ENCODE measurements at regions of chr4 and their contacts with region 1.

Region 1: GRCh38 chr4:68375667-68376559 is 26.0 kb upstream of the YTHDC1 start:
- DNase-seq: peak; percentile 87
- H3K4me3 Mint-ChIP-seq: peak overlapping the region; percentile 67
- H3K27ac Mint-ChIP-seq: no peak overlapping the region
- H3K4me1 Mint-ChIP-seq: peaks cover 24% of the 10 kb centered on the region
- H3K27me3 Mint-ChIP-seq: no peaks in the 10 kb centered on the region
- CTCF ChIP-seq: peak; percentile 89

Region 2: DNA sequence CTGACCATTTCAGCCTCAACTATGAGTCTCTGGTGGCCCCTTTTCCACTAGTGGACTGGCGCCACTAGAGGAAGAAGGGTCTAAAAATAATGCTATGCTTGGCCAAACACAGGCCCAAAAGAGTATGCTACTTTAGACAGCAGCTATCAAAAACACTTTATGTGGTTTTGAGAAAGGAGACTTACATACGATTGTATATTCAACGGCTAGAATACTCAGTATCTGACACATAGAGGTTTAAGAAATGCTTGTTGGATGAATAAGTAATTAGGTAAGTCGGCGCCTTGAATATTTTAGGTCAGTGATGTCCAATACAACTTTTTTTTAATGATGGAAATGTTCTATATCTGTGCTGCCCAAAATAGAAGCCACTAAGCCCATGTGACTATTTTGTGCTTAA is 386.9 kb before region 1 on chr4:
- CTCF ChIA-PET with region 1: no interaction called
- POLR2A ChIA-PET with region 1: no interaction called
- intact Hi-C with region 1: loop called (anchors 1 kb)
- DNase-seq: no peak
- H3K4me3 Mint-ChIP-seq: no peak overlapping the region
- H3K27ac Mint-ChIP-seq: no peak overlapping the region
- H3K4me1 Mint-ChIP-seq: no peaks in the 10 kb centered on the region
- H3K27me3 Mint-ChIP-seq: no peaks in the 10 kb centered on the region
- CTCF ChIP-seq: no peak

Region 3: GRCh38 chr4:68271851-68272756 is 103.8 kb before region 1 on chr4:
- CTCF ChIA-PET with region 1: interaction called, 62 read pairs
- POLR2A ChIA-PET with region 1: interaction called, 6 read pairs
- intact Hi-C with region 1: loop called (anchors 1 kb)
- DNase-seq: peak; percentile 67
- H3K4me3 Mint-ChIP-seq: peak overlapping the region; percentile 77
- H3K27ac Mint-ChIP-seq: no peak overlapping the region
- H3K4me1 Mint-ChIP-seq: peaks cover 7% of the 10 kb centered on the region
- H3K27me3 Mint-ChIP-seq: no peaks in the 10 kb centered on the region
- CTCF ChIP-seq: peak; percentile 63

Region 4: DNA sequence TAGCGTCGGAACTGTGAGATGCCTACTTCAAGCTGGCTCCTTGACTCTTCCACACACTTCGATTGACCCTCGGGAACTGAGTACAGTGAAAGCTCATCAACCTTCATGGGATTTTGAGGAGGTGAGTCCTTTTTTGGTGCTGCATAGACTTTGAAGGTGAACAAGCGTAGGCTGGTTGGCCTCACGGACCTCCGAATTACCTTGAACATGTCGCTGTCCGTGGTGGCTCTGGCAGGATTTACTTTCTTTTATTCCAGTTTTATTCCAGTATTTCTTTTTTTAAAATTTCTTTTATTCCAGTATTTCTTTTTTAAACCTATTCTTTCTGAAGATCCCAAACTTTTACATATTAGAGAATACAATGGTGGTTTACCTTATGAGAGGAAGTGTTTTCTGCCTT is 71.2 kb before region 1 on chr4:
- CTCF ChIA-PET with region 1: interaction called, 10 read pairs
- POLR2A ChIA-PET with region 1: interaction called, 3 read pairs
- intact Hi-C with region 1: no loop called
- DNase-seq: no peak
- H3K4me3 Mint-ChIP-seq: no peak overlapping the region
- H3K27ac Mint-ChIP-seq: no peak overlapping the region
- H3K4me1 Mint-ChIP-seq: no peaks in the 10 kb centered on the region
- H3K27me3 Mint-ChIP-seq: no peaks in the 10 kb centered on the region
- CTCF ChIP-seq: no peak

Region 5: GRCh38 chr4:68342134-68342533 is 33.8 kb before region 1 on chr4:
- CTCF ChIA-PET with region 1: interaction called, 45 read pairs
- POLR2A ChIA-PET with region 1: interaction called, 134 read pairs
- intact Hi-C with region 1: loop called (anchors 2 kb)
- DNase-seq: peak; percentile 74
- H3K4me3 Mint-ChIP-seq: peak overlapping the region; percentile 31
- H3K27ac Mint-ChIP-seq: peak overlapping the region; percentile 90
- H3K4me1 Mint-ChIP-seq: peaks cover 27% of the 10 kb centered on the region
- H3K27me3 Mint-ChIP-seq: no peaks in the 10 kb centered on the region
- CTCF ChIP-seq: no peak

Region 6: GRCh38 chr4:68359508-68359907 is 16.4 kb before region 1 on chr4:
- CTCF ChIA-PET with region 1: interaction called, 30 read pairs
- POLR2A ChIA-PET with region 1: interaction called, 26 read pairs
- intact Hi-C with region 1: no loop called
- DNase-seq: no peak
- H3K4me3 Mint-ChIP-seq: no peak overlapping the region
- H3K27ac Mint-ChIP-seq: peak overlapping the region; percentile 12
- H3K4me1 Mint-ChIP-seq: peaks cover 20% of the 10 kb centered on the region
- H3K27me3 Mint-ChIP-seq: no peaks in the 10 kb centered on the region
- CTCF ChIP-seq: no peak

Measured in MCF 10A (cell line).